ENCODE measurements at regions of chr2 and their contacts with region 1.

Region 1: GRCh38 chr2:101064868-101065549 is 62.9 kb downstream of the RPL31 start:
- DNase-seq: peak; percentile 98
- ATAC-seq: peak; percentile 91
- H3K4me3 ChIP-seq: peak overlapping the region; percentile 18 to 56 (median 35); a peak in 4 of 6 replicates
- H3K27ac ChIP-seq: peak overlapping the region; percentile 92
- H3K4me1 ChIP-seq: peaks cover 69% of the 10 kb centered on the region
- H3K27me3 ChIP-seq: no peaks in the 10 kb centered on the region
- CTCF ChIP-seq: no peak
- EP300 ChIP-seq: peak in 1 of 2 experiments; percentile 88; a peak in 2 of 4 replicates
- POLR2A ChIP-seq: 0 out of 4 replicates have a peak, but pooled peaks of 1 of the 2 experiments have one; percentile 26
- RAD21 ChIP-seq: no peak

Region 2: DNA sequence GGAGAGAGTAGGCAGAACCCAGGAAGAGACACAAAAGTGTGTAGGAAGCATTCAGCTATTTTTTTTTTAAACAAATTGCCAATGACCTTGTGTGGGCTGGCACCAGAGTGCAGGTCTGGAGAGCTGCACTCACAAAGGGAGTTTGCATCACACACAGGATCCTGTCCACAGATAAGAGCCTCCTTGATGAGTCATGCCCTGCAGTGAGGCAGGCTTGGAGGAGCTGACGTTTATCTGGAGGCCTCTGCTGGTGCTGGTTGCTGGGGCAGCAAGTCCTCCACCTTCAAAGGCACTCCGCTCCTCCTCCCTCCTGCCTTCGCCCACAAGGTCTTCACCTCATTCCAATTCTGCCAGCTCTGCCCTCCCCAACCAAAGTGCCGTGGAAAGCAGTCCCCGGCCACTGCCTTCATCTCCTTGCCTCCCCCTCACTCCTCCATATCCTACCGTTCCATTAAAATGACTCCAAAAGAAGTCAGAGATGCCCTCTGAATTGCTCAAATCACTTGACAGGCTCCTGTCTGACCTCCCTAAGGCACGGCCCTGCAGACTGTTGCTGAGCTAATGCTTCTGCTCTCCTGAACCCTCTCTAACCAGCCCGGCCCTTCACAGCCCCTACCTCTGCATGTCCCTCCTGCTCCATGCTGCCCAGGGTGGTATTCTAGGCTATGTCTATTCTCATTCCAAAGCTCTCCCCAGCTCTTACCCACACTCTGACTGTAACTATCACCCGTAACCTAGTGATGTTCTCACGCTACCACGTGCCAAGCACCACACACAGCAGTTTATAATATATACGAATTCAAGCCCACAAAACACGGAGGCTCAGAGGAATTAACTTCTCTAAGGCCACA is 773.7 kb before region 1 on chr2:
- CTCF ChIA-PET with region 1: no interaction called
- POLR2A ChIA-PET with region 1: no interaction called
- in situ Hi-C with region 1: no loop called
- intact Hi-C with region 1: no loop called
- DNase-seq: peak; percentile 72
- ATAC-seq: peak; percentile 90
- H3K4me3 ChIP-seq: no peak overlapping the region
- H3K27ac ChIP-seq: no peak overlapping the region
- H3K4me1 ChIP-seq: peaks cover 10% of the 10 kb centered on the region
- H3K27me3 ChIP-seq: peaks cover 0 to 6% of the 10 kb centered on the region in 2 experiments; a peak in 2 of 5 replicates
- CTCF ChIP-seq: no peak
- EP300 ChIP-seq: no peak
- POLR2A ChIP-seq: no peak
- RAD21 ChIP-seq: no peak

Region 3: GRCh38 chr2:100767224-100767653 is 297.8 kb before region 1 on chr2:
- CTCF ChIA-PET with region 1: no interaction called
- POLR2A ChIA-PET with region 1: no interaction called
- in situ Hi-C with region 1: no loop called
- intact Hi-C with region 1: no loop called
- DNase-seq: no peak
- ATAC-seq: no peak
- H3K4me3 ChIP-seq: no peak overlapping the region
- H3K27ac ChIP-seq: no peak overlapping the region
- H3K4me1 ChIP-seq: peaks cover 53% of the 10 kb centered on the region
- H3K27me3 ChIP-seq: no peaks in the 10 kb centered on the region
- CTCF ChIP-seq: no peak
- EP300 ChIP-seq: no peak
- POLR2A ChIP-seq: no peak
- RAD21 ChIP-seq: no peak

Region 4: DNA sequence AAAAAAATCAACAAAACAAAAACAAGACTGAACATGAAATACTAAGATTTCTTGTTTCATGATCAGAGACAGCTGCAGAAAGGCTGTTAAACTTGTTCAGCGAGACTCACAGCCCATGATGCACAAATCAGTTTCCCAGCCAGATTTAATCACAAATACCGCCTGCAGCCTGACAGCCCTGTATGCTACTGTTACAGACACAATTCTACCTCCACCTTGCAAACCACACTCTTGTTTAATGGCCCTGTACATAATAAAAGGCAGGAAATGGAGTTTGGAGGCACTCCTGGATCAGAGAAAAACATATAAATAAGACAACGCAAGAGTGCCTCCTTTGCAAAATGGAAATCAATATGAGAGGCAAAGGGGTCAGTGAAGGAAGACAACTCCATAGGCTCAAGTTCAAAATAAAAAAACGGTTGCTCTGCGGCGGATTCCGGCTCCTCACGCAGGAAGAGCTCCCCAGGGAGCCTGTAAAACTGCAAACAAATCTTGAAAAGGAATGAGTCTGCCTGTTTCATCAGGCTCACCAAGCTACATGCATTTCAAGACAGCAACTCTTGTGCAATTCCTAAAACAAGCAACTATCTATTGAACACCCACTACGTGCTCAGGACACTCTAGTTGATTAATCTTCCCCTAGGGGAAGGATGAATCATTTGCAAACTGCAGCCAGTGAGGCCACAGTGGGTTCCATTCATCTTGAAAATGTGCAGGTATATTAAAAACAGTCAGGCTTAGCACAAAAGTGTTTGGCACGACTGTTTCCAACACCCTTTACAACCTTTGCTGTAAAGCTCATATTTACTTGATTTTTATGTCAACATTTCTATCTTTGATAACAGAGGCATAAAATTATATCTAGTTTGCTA is 48.6 kb after region 1 on chr2:
- CTCF ChIA-PET with region 1: no interaction called
- POLR2A ChIA-PET with region 1: interaction called, 18 read pairs
- in situ Hi-C with region 1: no loop called
- intact Hi-C with region 1: loop called (anchors 1 kb)
- DNase-seq: peak; percentile 88
- ATAC-seq: no peak
- H3K4me3 ChIP-seq: peak overlapping the region in 1 of 3 experiments; percentile 13; a peak in 1 of 6 replicates
- H3K27ac ChIP-seq: peak overlapping the region; percentile 100
- H3K4me1 ChIP-seq: peaks cover 96% of the 10 kb centered on the region
- H3K27me3 ChIP-seq: no peaks in the 10 kb centered on the region
- CTCF ChIP-seq: no peak
- EP300 ChIP-seq: peak in 1 of 2 experiments; percentile 88; a peak in 2 of 4 replicates
- POLR2A ChIP-seq: no peak
- RAD21 ChIP-seq: no peak

Region 5: GRCh38 chr2:101120172-101120996 is 55.4 kb after region 1 on chr2:
- CTCF ChIA-PET with region 1: no interaction called
- POLR2A ChIA-PET with region 1: interaction called, 22 read pairs
- in situ Hi-C with region 1: no loop called
- intact Hi-C with region 1: loop called (anchors 1 kb)
- DNase-seq: peak; percentile 98
- ATAC-seq: peak; percentile 69
- H3K4me3 ChIP-seq: peak overlapping the region in 1 of 3 experiments; percentile 11; a peak in 1 of 6 replicates
- H3K27ac ChIP-seq: peak overlapping the region; percentile 79
- H3K4me1 ChIP-seq: peaks cover 97% of the 10 kb centered on the region
- H3K27me3 ChIP-seq: no peaks in the 10 kb centered on the region
- CTCF ChIP-seq: no peak
- EP300 ChIP-seq: peak; percentile 42 to 75; a peak in 2 of 4 replicates
- POLR2A ChIP-seq: 0 out of 4 replicates have a peak, but pooled peaks of 1 of the 2 experiments have one; percentile 38
- RAD21 ChIP-seq: peak; percentile 49; the same call in 1 of the 2 replicates

Region 6: DNA sequence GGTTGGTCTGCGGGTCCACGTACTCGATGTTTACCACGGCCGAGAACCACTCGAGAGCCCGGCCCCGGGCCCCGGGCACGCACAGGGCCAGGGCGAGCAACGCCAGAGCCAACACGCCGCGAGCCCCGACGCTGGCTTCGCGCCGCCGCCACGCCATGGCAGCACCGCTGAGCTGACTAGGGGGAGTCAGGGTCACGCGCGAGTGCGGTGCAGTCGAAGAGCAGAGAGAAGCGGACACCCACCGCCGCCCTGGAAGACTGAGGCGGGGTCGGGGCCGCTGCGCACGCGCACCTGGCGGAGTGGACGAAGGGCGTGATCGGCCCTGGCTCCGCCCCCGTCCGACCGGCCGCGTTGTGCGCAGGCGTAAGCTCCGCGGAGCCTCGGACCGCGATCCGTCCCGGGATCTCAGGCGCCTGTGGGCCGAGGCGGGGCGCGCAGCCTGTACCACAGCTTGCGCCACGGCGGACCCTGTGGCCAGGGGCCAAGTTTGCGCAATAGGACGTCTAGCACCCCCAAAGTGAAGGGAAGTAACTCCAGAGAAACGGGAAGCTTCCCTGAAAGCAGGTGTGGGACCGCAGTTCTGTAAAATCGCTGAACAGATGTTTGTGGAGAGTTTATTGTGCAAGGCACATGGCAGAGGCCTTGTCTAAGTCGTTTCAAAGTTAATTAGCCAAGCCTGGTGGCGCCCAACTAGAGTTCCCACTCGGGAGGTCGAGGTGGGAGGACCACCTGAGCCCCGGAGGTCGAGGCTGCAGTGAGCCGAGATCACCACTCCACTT is 243.6 kb after region 1 on chr2 and contains the start of gene RNF149:
- CTCF ChIA-PET with region 1: no interaction called
- POLR2A ChIA-PET with region 1: no interaction called
- in situ Hi-C with region 1: no loop called
- intact Hi-C with region 1: no loop called
- DNase-seq: peak; percentile 88
- ATAC-seq: peak; percentile 86
- H3K4me3 ChIP-seq: peak within 1 kb of the TSS; percentile 76 to 95 (median 93)
- H3K27ac ChIP-seq: peak within 1 kb of the TSS; percentile 85
- H3K4me1 ChIP-seq: peaks cover 65% of the 10 kb centered on the region
- H3K27me3 ChIP-seq: no peaks in the 10 kb centered on the region; a peak in 1 of 5 replicates
- CTCF ChIP-seq: peak; percentile 48
- EP300 ChIP-seq: peak; percentile 76 to 82
- POLR2A ChIP-seq: peak; percentile 90 to 98
- RAD21 ChIP-seq: peak; percentile 49
- total RNA-seq, gene RNF149: 45.7 and 109 TPM in 2 replicates